Heart left ventricle (tissue), 16 donors: ENCODE measurements at regions of chr2 and their contacts with region 1.

Region 1: GRCh38 chr2:78654941-78655340 is 370.6 kb upstream of the REG3G start:
- DNase-seq: no peak
- ATAC-seq: no peak
- H3K4me3 ChIP-seq: no peak overlapping the region
- H3K27ac ChIP-seq: no peak overlapping the region
- H3K4me1 ChIP-seq: no peaks in the 10 kb centered on the region
- H3K27me3 ChIP-seq: no peaks in the 10 kb centered on the region
- CTCF ChIP-seq: no peak
- POLR2A ChIP-seq: no peak

Region 2: GRCh38 chr2:77567723-77568122 is 1087.2 kb before region 1 on chr2:
- intact Hi-C with region 1: loop called in 1 of 10 experiments (anchors 10 kb)
- DNase-seq: no peak
- ATAC-seq: no peak
- H3K4me3 ChIP-seq: no peak overlapping the region
- H3K27ac ChIP-seq: no peak overlapping the region
- H3K4me1 ChIP-seq: no peaks in the 10 kb centered on the region
- H3K27me3 ChIP-seq: no peaks in the 10 kb centered on the region
- CTCF ChIP-seq: no peak
- POLR2A ChIP-seq: no peak